Sigmoid colon (tissue), 7 donors: ENCODE measurements at regions of chr16 and their contacts with region 1.

Region 1: DNA sequence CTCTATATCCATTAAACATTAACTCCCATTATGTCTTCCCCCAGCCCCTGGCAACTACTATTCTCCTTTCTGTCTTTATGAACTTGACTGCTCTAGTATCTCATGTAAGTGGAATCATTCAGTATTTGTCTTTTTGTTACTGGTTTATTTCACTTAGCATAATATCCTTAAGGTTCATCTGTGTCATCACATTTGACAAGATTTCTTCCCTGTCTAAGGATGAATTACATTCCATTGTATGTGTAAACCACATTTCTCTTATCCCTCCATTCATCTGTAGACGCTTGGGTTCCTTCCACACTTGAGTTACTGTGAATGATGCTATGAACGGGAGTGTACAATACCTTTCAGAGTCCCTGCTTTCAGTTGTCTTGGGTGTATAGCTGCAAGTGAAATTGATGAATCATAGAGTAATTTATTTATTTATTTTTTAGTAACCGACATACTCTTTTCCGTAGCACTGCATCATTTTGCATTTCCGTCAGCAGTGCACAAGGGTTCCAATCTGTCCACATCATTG is 399.7 kb upstream of the RBFOX1 start:
- DNase-seq: no peak
- H3K4me3 ChIP-seq: no peak overlapping the region
- H3K27ac ChIP-seq: no peak overlapping the region
- H3K4me1 ChIP-seq: no peaks in the 10 kb centered on the region
- H3K27me3 ChIP-seq: no peaks in the 10 kb centered on the region
- CTCF ChIP-seq: no peak
- EP300 ChIP-seq: no peak
- POLR2A ChIP-seq: no peak

Region 2: DNA sequence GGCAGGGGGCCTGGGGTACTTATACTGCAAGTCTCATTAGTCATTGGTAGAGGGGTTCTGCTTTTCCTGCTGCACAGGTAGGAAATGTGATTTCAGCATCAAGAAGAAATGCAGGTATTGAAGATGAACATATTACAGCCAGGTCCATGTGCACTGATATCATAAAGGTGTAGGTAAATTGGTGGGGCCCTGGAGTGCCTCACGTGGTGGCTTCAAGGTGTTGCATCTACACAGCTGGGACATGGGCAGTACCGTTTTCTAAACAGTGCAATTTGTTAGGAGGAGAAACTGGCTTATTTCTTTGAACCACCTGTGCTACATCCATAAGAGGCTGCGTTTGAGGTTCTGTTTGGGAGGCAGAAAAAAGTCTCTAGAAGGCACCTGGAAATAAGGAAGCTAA is 218.4 kb before region 1 on chr16:
- intact Hi-C with region 1: no loop called
- DNase-seq: no peak
- H3K4me3 ChIP-seq: no peak overlapping the region
- H3K27ac ChIP-seq: no peak overlapping the region
- H3K4me1 ChIP-seq: no peaks in the 10 kb centered on the region
- H3K27me3 ChIP-seq: no peaks in the 10 kb centered on the region
- CTCF ChIP-seq: no peak
- EP300 ChIP-seq: no peak
- POLR2A ChIP-seq: no peak

Region 3: GRCh38 chr16:6884002-6884401 is 48.9 kb before region 1 on chr16:
- intact Hi-C with region 1: loop called (anchors 10 kb)
- DNase-seq: no peak
- H3K4me3 ChIP-seq: no peak overlapping the region
- H3K27ac ChIP-seq: no peak overlapping the region
- H3K4me1 ChIP-seq: no peaks in the 10 kb centered on the region
- H3K27me3 ChIP-seq: no peaks in the 10 kb centered on the region
- CTCF ChIP-seq: no peak
- EP300 ChIP-seq: no peak
- POLR2A ChIP-seq: no peak